Activated naive CD4-positive, alpha-beta T cell treated with anti-CD3 and anti-CD28 coated beads for 36 hours (primary cell): ENCODE measurements at regions of chr19 and their contacts with region 1.

Region 1: GRCh38 chr19:45862564-45863334 is at the start of gene SYMPK:
- DNase-seq: peak; percentile 99
- H3K4me3 Mint-ChIP-seq: peak within 1 kb of the TSS; percentile 88
- H3K27ac Mint-ChIP-seq: peak within 1 kb of the TSS; percentile 94
- H3K4me1 Mint-ChIP-seq: peaks cover 24% of the 10 kb centered on the region
- H3K27me3 Mint-ChIP-seq: peaks cover 23% of the 10 kb centered on the region
- total RNA-seq, gene SYMPK: 96.9 to 97.4 TPM

Region 2: DNA sequence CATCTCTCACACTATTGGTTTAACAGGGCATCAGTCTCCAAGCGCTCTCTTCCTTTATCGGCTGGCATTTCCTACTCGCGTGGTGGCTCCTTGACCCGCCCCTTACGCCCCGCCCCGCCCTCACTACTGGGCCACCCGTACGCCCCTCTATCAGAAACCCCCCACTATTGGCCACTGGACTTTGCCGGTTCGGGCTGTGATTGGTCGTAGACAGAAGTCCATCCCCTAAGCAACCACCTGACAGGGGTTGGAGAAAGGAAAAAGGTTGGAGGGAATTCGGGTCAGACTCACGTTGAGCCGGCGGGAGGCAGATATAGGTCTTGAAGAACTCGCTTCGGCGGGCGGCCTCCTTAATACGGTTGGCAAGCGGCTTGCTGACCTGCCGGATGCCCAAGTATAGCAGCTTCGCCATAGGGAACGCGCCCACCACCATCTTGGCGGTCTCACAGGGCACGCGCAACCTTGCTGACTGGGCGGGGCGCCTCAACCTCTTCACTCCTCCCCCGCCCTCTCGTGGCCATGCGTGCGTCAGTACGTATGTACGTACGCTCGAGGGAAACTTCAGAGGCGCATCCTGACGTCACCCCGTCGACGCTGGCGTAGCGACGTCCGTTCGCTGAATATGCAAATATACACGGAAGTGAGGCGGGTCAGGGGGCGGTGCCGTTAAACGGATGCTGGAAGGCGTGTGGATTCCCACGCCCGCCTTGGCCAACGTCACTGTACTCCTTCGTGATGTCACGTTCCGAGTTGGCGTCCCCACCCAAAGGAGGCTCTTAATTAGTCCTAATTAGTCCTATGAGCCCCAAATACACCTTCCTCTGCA is 278.2 kb before region 1 on chr19 and contains the start of gene OPA3:
- CTCF ChIA-PET with region 1: no interaction called
- intact Hi-C with region 1: loop called (anchors 10 kb)
- DNase-seq: peak; percentile 100
- H3K4me3 Mint-ChIP-seq: peak within 1 kb of the TSS; percentile 89
- H3K27ac Mint-ChIP-seq: peak within 1 kb of the TSS; percentile 98
- H3K4me1 Mint-ChIP-seq: peaks cover 14% of the 10 kb centered on the region
- H3K27me3 Mint-ChIP-seq: peaks cover 3% of the 10 kb centered on the region
- total RNA-seq, gene OPA3: 12.4 to 12.7 TPM

Region 3: DNA sequence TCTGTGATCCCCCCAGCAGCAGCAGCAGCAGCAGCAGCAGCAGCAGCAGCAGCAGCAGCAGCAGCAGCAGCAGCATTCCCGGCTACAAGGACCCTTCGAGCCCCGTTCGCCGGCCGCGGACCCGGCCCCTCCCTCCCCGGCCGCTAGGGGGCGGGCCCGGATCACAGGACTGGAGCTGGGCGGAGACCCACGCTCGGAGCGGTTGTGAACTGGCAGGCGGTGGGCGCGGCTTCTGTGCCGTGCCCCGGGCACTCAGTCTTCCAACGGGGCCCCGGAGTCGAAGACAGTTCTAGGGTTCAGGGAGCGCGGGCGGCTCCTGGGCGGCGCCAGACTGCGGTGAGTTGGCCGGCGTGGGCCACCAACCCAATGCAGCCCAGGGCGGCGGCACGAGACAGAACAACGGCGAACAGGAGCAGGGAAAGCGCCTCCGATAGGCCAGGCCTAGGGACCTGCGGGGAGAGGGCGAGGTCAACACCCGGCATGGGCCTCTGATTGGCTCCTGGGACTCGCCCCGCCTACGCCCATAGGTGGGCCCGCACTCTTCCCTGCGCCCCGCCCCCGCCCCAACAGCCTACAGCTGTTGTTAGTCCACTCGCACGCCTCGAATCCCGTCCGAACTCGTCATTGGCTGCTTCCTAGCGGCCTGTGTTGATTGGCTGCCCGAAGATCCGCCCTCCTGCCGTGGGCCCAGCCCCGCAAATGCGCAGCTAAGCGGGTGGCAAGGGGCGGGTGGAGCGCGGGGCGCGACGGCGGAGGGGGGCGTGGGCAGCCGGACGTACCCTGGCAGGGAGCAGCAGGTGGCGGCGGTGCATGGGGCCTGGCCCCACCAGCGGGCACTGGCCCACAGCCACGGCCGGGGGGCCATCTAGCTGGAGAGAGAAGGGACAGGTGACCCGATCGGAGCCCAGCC is 92.3 kb before region 1 on chr19:
- CTCF ChIA-PET with region 1: interaction called, 5 read pairs
- intact Hi-C with region 1: loop called (anchors 1 kb)
- DNase-seq: peak; percentile 89
- H3K4me3 Mint-ChIP-seq: peak overlapping the region; percentile 81
- H3K27ac Mint-ChIP-seq: no peak overlapping the region
- H3K4me1 Mint-ChIP-seq: peaks cover 10% of the 10 kb centered on the region
- H3K27me3 Mint-ChIP-seq: peaks cover 16% of the 10 kb centered on the region

Region 4: DNA sequence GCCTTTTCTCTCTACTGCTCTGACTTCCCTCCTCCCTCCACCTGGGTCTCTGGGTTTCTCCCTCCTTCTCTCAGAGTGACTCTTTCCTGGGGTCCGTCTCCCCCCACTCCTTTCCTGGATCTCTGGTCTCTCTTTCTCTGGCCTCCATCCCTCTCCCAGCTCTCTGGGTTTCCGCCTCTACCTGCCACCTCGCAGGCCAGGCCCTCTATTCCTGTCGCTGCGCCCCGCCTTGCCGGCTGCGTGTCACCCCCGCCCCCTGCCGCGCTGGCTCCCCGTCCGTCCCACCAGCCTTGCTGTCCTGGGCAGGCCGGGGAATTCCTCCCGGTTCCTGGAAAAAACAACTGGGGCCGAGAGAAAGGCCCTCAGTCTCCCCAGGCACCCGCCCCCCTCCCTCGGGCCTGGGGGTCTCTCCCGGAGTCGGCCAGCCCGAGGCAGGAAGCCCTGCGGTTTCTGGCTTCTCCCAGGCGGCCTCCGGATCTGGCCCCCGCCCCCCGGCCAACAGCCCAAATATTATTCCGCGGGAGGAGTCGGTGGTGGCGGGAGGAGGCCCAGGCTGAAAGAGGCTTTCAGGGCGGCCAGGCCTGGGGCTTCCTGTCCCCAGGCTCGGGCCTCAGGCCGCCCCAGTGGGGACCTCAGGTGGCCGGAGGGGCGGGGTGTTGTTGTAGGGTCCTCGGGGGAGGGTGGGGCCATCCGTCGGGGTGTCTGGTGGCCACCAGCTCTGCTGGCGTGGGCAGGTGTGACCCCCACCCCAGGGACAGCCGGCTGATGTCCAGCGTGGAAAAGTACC is 13.9 kb after region 1 on chr19:
- CTCF ChIA-PET with region 1: interaction called, 84 read pairs
- intact Hi-C with region 1: loop called (anchors 1 kb)
- DNase-seq: peak; percentile 80
- H3K4me3 Mint-ChIP-seq: peak overlapping the region; percentile 0
- H3K27ac Mint-ChIP-seq: peak overlapping the region; percentile 28
- H3K4me1 Mint-ChIP-seq: peaks cover 19% of the 10 kb centered on the region
- H3K27me3 Mint-ChIP-seq: peaks cover 28% of the 10 kb centered on the region

Region 5: GRCh38 chr19:45927565-45928261 is 65.0 kb after region 1 on chr19:
- CTCF ChIA-PET with region 1: no interaction called
- intact Hi-C with region 1: loop called (anchors 1 kb)
- DNase-seq: peak; percentile 96
- H3K4me3 Mint-ChIP-seq: peak overlapping the region; percentile 74
- H3K27ac Mint-ChIP-seq: no peak overlapping the region
- H3K4me1 Mint-ChIP-seq: peaks cover 7% of the 10 kb centered on the region
- H3K27me3 Mint-ChIP-seq: peaks cover 5% of the 10 kb centered on the region

Region 6: DNA sequence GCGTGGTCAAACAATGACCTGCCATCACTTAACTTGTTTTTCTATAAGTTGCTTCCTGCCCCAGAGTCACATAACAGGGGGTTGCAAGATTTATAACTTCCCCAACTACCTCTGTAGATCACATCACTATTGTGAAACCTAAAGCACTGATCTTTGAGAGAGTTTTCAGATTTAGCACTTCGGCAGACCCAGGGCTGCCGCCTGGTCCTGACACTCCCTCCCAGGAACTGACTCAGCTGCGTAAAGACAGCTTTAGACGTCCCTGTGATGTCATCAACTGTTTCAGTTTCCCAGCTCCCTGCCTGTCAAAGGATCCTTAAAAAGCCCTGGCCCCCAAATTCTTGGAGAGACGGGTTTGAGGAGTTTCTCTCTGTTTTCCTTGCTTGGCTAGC is 318.6 kb after region 1 on chr19:
- CTCF ChIA-PET with region 1: no interaction called
- intact Hi-C with region 1: loop called (anchors 2 kb)
- DNase-seq: peak; percentile 72
- H3K4me3 Mint-ChIP-seq: no peak overlapping the region
- H3K27ac Mint-ChIP-seq: peak overlapping the region; percentile 79
- H3K4me1 Mint-ChIP-seq: peaks cover 42% of the 10 kb centered on the region
- H3K27me3 Mint-ChIP-seq: peaks cover 21% of the 10 kb centered on the region